ENCODE measurements at regions of chr2 and their contacts with region 1.

Region 1: GRCh38 chr2:20962939-20963557 is 80.8 kb downstream of the APOB start:
- DNase-seq: no peak
- H3K4me3 ChIP-seq: no peak overlapping the region
- H3K27me3 ChIP-seq: peaks cover 3% of the 10 kb centered on the region
- CTCF ChIP-seq: peak; percentile 87

Region 2: DNA sequence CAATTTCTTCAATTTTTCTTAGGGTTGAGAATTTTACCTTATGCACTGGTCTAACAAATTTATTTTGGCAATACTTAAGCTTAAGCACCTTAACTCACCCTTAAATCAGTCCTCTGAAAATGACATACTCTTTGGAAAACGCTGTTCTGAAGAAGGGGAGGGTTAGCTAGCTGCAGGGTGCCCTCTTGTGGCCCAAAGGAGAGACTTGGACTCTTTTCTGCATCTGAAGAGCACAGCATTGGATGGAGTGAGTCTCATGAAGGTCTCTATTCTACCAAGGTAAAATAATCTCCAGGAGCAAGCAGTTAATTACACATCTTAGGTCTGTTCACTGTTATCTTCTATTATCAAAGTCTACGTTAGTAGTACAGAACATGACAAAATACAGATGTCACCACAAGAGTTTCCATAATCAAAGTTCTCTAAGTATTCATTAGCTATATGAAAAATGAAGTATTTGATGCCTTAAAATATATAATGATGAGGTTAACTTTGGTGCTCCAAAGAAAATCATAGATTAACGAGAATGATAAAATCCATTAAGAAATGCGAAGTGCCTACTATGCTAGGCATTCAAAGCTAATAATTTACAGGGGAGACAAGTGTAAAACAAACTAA is 636.8 kb before region 1 on chr2:
- CTCF ChIA-PET with region 1: no interaction called
- POLR2A ChIA-PET with region 1: no interaction called
- DNase-seq: no peak
- H3K4me3 ChIP-seq: no peak overlapping the region
- H3K27me3 ChIP-seq: no peaks in the 10 kb centered on the region
- CTCF ChIP-seq: peak; percentile 92

Region 3: DNA sequence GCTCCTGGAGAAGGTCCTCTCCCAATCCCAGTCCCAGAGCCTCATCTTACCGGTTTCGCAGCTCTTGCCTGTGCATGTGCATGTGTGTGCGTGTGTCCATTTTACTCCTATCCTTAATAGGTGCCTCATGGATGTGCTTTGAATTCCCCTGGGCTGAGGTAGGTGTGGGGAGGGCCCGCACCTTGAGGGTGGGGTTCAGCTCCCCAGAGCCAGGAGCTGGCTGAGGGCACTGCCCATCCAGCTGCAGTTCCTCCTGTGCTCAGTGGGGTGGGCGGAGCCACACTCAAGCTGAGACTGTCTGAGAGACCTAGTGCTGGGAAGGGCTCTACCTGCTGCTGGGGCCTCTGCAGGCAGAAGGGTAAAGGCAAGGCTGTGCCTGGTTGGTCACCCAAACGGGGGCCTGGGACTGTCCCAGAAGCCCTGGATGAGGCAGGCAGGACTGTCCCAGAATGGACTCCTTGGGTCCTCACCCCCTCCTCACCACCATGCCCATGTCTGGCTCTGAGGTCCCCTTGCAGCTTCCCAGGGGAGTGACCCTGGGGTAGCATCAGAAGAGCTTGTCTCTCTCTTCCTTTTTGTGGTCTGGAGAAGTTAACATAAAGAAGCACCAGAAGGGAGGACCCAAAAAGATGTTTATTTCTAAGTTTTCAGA is 287.2 kb before region 1 on chr2:
- CTCF ChIA-PET with region 1: interaction called, 23 read pairs
- POLR2A ChIA-PET with region 1: no interaction called
- DNase-seq: no peak
- H3K4me3 ChIP-seq: no peak overlapping the region
- H3K27me3 ChIP-seq: peaks cover 1% of the 10 kb centered on the region; the same call in 1 of the 2 replicates
- CTCF ChIP-seq: no peak

Region 4: GRCh38 chr2:20682167-20682920 is 280.7 kb before region 1 on chr2:
- CTCF ChIA-PET with region 1: interaction called, 23 read pairs
- POLR2A ChIA-PET with region 1: no interaction called
- DNase-seq: no peak
- H3K4me3 ChIP-seq: no peak overlapping the region
- H3K27me3 ChIP-seq: no peaks in the 10 kb centered on the region
- CTCF ChIP-seq: peak; percentile 83

Region 5: GRCh38 chr2:20781656-20782265 is 181.3 kb before region 1 on chr2:
- CTCF ChIA-PET with region 1: interaction called, 35 read pairs
- POLR2A ChIA-PET with region 1: no interaction called
- DNase-seq: no peak
- H3K4me3 ChIP-seq: no peak overlapping the region
- H3K27me3 ChIP-seq: no peaks in the 10 kb centered on the region
- CTCF ChIP-seq: peak; percentile 73

Measured in BJ (cell line).